Heart left ventricle (tissue), 16 donors: ENCODE measurements at regions of chr19 and their contacts with region 1.

Region 1: GRCh38 chr19:14347999-14348889 is 33.0 kb upstream of the ADGRE5 start:
- DNase-seq: peak; percentile 58 to 86 (median 72)
- ATAC-seq: peak; percentile 65 to 84 (median 82)
- H3K4me3 ChIP-seq: peak overlapping the region in 8 of 12 donors; percentile 12 to 41 (median 28)
- H3K27ac ChIP-seq: no peak overlapping the region
- H3K4me1 ChIP-seq: peaks cover 0 to 13% (median 2%) of the 10 kb centered on the region in 12 donors
- H3K27me3 ChIP-seq: no peaks in the 10 kb centered on the region
- CTCF ChIP-seq: peak; percentile 87 to 99 (median 96)
- POLR2A ChIP-seq: no peak

Region 2: DNA sequence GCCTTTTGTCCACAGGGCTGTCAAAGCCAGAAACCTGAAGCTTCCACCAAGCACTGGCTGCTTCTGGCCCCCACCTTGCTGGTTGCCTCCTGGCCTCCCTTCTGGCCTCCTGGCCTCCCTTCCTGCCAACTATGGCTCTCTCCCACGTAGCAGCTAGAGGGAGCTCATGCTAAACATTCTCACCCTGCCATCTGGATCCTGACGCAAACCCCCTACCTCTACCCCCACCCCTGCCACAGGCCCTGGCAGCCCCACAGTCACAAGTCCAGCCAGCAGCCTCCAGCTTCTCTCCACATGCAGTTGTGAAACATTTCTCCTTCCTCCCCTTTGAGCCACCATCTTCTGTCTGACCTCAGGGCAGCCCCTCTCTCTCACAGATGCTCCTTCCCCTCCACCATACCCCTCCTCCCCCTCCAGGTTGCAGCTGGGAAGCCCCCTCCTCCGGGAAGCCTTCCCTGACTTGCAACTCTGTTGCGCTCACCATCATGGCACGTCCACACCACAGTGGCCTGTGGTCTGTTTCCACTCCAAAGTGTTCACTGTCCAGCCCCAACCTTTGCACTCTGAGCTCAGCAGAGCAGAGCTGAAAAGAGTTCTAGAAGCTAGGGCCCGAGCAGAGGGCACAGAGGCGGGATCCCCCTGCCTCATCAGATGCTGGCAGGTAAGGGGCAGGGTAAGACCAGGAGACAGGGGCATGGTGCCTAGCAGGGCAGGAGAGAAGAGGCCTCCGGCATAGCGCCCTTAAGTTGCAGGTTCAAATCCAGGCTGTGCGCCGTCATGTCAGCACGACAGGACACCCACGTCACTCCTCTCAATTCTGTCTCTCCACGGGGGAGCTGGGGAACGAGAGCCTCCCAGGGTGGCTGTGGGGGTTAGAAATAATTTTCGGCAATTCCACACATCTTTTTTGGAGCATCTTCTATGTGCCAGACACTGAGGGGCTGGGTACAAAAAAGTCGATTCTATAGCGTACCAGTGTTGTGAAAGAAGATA is 149.6 kb before region 1 on chr19:
- intact Hi-C with region 1: loop called in 9 of 10 experiments (anchors 2 to 10 kb)
- DNase-seq: no peak
- ATAC-seq: no peak
- H3K4me3 ChIP-seq: no peak overlapping the region
- H3K27ac ChIP-seq: no peak overlapping the region
- H3K4me1 ChIP-seq: peaks cover 0 to 5% (median 0%) of the 10 kb centered on the region in 12 donors
- H3K27me3 ChIP-seq: no peaks in the 10 kb centered on the region
- CTCF ChIP-seq: no peak
- POLR2A ChIP-seq: no peak

Region 3: GRCh38 chr19:14222886-14223285 is 125.4 kb before region 1 on chr19:
- intact Hi-C with region 1: loop called in 1 of 10 experiments (anchors 10 kb)
- DNase-seq: no peak
- ATAC-seq: no peak
- H3K4me3 ChIP-seq: no peak overlapping the region
- H3K27ac ChIP-seq: no peak overlapping the region
- H3K4me1 ChIP-seq: peaks cover 0 to 3% (median 0%) of the 10 kb centered on the region in 12 donors
- H3K27me3 ChIP-seq: no peaks in the 10 kb centered on the region
- CTCF ChIP-seq: no peak
- POLR2A ChIP-seq: no peak